CD8-positive, alpha-beta T cell (primary cell): ENCODE measurements at regions of chr19 and their contacts with region 1.

Region 1: DNA sequence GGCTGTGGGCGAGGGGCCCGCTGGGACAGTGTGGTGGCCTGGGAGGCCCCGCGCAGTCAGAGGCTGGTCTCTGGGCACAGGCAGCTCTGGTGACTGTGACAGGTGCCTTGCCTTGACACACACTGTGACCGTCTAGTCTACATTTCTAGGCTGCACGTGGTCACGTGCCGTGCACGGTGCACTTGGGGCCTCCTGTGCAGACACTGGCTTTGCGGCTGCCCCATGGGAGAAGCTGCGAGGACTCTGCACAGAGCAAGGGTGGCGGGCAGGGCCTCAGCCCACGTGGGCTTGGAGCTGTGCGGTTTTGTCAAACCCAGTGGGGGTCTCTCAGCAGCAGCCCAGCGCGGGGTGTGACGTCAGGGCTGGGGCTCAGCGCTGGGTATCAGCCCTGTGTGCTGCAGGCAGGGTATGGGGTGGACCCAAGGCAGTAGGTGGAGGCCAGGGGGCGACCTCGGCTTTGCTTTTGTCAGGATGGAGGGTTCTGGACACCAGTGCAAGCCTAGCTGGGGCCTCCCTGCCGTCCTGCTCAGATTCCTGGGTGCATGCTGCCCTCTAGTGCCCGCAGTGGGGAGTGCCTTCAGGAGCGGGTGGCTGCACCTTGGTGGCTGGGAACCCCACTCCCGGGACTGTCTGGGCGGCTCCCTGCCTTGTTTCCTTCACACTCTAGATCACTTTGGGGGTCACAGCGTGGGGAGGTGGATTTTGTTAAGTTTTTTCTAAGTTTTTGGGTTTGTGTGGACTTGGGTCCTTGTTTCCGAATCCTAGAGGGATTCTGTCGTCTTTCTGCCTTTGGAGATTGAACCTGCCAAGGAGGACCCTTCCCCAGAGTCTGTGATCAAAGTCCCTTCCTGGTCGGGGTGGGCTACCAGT is 62.6 kb downstream of the KDM4B start:
- DNase-seq: peak; percentile 70 to 92 (median 81)
- ATAC-seq: peak; percentile 87
- H3K4me3 ChIP-seq: no peak overlapping the region
- H3K4me3 Mint-ChIP-seq: no peak overlapping the region
- H3K27ac ChIP-seq: no peak overlapping the region
- H3K27ac Mint-ChIP-seq: no peak overlapping the region
- H3K4me1 ChIP-seq: peaks cover 7% of the 10 kb centered on the region
- H3K4me1 Mint-ChIP-seq: peaks cover 8% of the 10 kb centered on the region
- H3K27me3 ChIP-seq: no peaks in the 10 kb centered on the region
- H3K27me3 Mint-ChIP-seq: no peaks in the 10 kb centered on the region
- CTCF ChIP-seq: peak; percentile 88

Region 2: DNA sequence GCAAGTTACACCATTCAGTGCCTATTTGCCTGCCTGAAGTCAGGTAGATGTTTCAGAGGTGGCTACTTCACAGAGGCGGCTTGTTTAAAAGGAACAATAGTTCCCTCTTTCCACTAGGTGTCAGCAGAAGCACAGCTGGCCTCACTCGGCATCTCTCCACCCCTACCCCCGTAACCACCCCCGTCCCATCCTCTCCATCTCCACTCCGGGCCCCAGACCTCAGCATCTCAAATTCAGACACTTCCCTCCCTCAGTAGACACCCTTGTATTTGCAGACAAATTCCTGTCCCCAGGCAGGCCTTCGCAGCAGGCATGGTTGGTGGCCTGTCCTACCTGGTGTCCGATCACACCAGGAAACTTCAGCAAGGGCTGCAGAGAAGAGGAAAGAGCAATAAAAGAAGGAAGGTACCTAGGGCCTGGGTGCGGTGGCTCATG is 298.8 kb before region 1 on chr19:
- CTCF ChIA-PET with region 1: interaction called, 3 read pairs
- POLR2A ChIA-PET with region 1: no interaction called
- intact Hi-C with region 1: loop called in 1 of 2 experiments (anchors 5 kb)
- DNase-seq: peak; percentile 12 to 80 (median 47)
- ATAC-seq: peak; percentile 90
- H3K4me3 ChIP-seq: peak overlapping the region in 1 of 2 experiments; percentile 27
- H3K4me3 Mint-ChIP-seq: no peak overlapping the region
- H3K27ac ChIP-seq: no peak overlapping the region
- H3K27ac Mint-ChIP-seq: no peak overlapping the region
- H3K4me1 ChIP-seq: peaks cover 5% of the 10 kb centered on the region
- H3K4me1 Mint-ChIP-seq: peaks cover 4% of the 10 kb centered on the region
- H3K27me3 ChIP-seq: no peaks in the 10 kb centered on the region
- H3K27me3 Mint-ChIP-seq: peaks cover 9% of the 10 kb centered on the region
- CTCF ChIP-seq: peak; percentile 69

Region 3: DNA sequence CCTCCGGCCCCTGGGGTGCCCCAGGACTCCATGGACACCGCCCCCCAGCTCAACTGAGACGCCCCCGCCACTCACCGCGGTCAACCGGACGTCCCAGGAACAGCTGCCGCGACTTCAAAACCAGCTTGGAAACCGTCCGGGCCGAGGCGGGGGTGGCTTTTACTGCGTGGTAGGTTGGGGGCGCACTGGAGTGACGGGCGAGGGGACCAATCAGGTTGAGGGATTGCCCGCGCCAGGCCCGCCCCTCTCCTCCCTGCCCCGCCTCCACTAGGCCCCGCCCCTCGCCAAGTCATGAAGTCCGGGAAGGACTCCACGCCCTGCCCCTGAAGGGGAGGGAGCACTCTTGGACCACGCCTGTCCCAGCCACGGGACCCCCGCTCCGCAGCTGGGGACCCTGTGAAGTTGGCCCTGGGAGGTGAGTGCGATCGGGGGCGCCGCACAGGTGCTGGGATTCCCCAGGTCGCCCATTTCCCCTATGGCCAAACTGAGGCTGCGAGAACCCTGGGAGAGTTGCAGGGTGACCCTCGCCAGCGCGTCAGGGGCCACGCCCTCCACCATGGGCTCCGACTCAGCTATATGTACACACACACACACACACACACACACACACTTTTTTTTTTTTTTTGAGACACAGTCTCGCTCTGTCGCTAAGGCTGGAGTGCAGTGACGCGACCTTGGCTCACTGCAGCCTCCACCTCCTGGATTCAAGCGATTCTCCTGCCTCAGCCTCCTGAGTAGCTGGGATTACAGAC is 163.8 kb before region 1 on chr19 and contains the start of gene PLIN3:
- CTCF ChIA-PET with region 1: interaction called, 81 read pairs
- POLR2A ChIA-PET with region 1: no interaction called
- intact Hi-C with region 1: loop called in 1 of 2 experiments (anchors 1 kb)
- DNase-seq: peak; percentile 74 to 91 (median 87)
- ATAC-seq: peak; percentile 94
- H3K4me3 ChIP-seq: peak within 1 kb of the TSS; percentile 72 to 78
- H3K4me3 Mint-ChIP-seq: peak within 1 kb of the TSS; percentile 78
- H3K27ac ChIP-seq: peak within 1 kb of the TSS; percentile 30 to 55
- H3K27ac Mint-ChIP-seq: peak within 1 kb of the TSS; percentile 49
- H3K4me1 ChIP-seq: peaks cover 17% of the 10 kb centered on the region
- H3K4me1 Mint-ChIP-seq: peaks cover 16% of the 10 kb centered on the region
- H3K27me3 ChIP-seq: no peaks in the 10 kb centered on the region
- H3K27me3 Mint-ChIP-seq: no peaks in the 10 kb centered on the region
- CTCF ChIP-seq: no peak
- total RNA-seq, gene PLIN3: 16.2 to 16.7 TPM

Region 4: GRCh38 chr19:4951656-4952055 is 79.8 kb before region 1 on chr19:
- CTCF ChIA-PET with region 1: no interaction called
- POLR2A ChIA-PET with region 1: no interaction called
- intact Hi-C with region 1: loop called in 1 of 2 experiments (anchors 10 kb)
- DNase-seq: no peak
- ATAC-seq: no peak
- H3K4me3 ChIP-seq: no peak overlapping the region
- H3K4me3 Mint-ChIP-seq: no peak overlapping the region
- H3K27ac ChIP-seq: no peak overlapping the region
- H3K27ac Mint-ChIP-seq: no peak overlapping the region
- H3K4me1 ChIP-seq: no peaks in the 10 kb centered on the region
- H3K4me1 Mint-ChIP-seq: no peaks in the 10 kb centered on the region
- H3K27me3 ChIP-seq: no peaks in the 10 kb centered on the region
- H3K27me3 Mint-ChIP-seq: no peaks in the 10 kb centered on the region
- CTCF ChIP-seq: no peak

Region 5: DNA sequence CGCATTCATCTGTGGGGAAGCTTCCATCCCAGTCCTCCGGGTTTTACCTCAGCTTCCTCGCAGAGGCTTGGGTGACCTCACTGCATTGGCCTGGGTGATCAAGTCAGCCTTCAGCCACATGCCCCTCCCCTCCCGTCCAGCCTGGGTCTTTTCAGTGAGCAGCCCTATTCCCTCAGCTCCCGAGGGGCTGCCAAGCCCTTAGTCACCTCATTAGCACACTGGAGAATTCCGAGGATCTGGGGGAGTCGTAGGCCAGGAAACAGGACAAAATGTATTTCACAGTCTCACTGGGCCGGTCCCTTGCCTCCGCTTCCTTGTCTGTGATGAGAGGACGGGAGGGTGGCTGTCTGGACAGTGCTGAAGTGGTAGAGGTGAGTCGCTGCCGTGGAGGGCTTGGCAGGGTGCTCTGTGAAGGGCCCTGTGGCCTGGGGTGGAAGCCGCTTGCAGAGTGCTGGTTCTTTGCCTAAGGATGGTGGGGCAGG is 42.7 kb before region 1 on chr19:
- CTCF ChIA-PET with region 1: no interaction called
- POLR2A ChIA-PET with region 1: no interaction called
- intact Hi-C with region 1: no loop called
- DNase-seq: no peak
- ATAC-seq: no peak
- H3K4me3 ChIP-seq: no peak overlapping the region
- H3K4me3 Mint-ChIP-seq: no peak overlapping the region
- H3K27ac ChIP-seq: no peak overlapping the region
- H3K27ac Mint-ChIP-seq: no peak overlapping the region
- H3K4me1 ChIP-seq: no peaks in the 10 kb centered on the region
- H3K4me1 Mint-ChIP-seq: peaks cover 18% of the 10 kb centered on the region
- H3K27me3 ChIP-seq: no peaks in the 10 kb centered on the region
- H3K27me3 Mint-ChIP-seq: no peaks in the 10 kb centered on the region
- CTCF ChIP-seq: no peak

Region 6: GRCh38 chr19:5001615-5002014 is 29.9 kb before region 1 on chr19:
- CTCF ChIA-PET with region 1: interaction called, 11 read pairs
- POLR2A ChIA-PET with region 1: no interaction called
- intact Hi-C with region 1: no loop called
- DNase-seq: peak in 8 of 9 experiments; percentile 4 to 55 (median 32)
- ATAC-seq: peak; percentile 54
- H3K4me3 ChIP-seq: no peak overlapping the region
- H3K4me3 Mint-ChIP-seq: no peak overlapping the region
- H3K27ac ChIP-seq: no peak overlapping the region
- H3K27ac Mint-ChIP-seq: no peak overlapping the region
- H3K4me1 ChIP-seq: no peaks in the 10 kb centered on the region
- H3K4me1 Mint-ChIP-seq: peaks cover 10% of the 10 kb centered on the region
- H3K27me3 ChIP-seq: no peaks in the 10 kb centered on the region
- H3K27me3 Mint-ChIP-seq: no peaks in the 10 kb centered on the region
- CTCF ChIP-seq: peak; percentile 44